K562 (cell line): ENCODE measurements at regions of chr6 and their contacts with region 1.

Region 1: DNA sequence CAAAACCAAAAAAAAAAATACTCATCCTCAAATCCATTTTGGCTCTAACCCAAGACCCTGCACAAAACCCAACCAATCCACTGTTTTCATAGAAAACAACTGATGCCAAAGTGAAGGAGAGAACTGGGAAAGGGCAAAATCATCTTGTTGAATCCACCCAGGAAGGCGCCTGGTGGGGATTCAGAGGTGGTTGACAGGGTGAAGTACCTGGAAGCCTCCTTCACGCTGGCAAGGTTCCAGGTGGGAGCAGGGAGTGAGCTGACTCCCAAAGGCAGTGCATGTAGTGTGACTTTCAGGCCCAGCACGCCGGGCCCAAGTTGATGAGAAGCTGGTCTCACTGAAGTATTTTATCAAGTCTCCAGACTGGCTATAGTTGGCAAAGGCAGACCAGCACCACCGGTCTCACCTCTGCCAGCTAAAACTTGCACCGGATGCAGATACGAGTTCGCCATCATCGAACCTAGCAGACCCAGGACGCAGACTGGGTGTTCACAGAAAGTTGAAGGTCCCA is 16.5 kb downstream of the PPP1R10 start:
- DNase-seq: peak in 2 of 4 experiments; percentile 29 to 30
- ATAC-seq: no peak
- H3K4me3 ChIP-seq: no peak overlapping the region
- H3K27ac ChIP-seq: no peak overlapping the region
- H3K4me1 ChIP-seq: peaks cover 4 to 11% of the 10 kb centered on the region in 2 experiments; a peak in 4 of 5 replicates
- H3K27me3 ChIP-seq: no peaks in the 10 kb centered on the region
- CTCF ChIP-seq: no peak
- EP300 ChIP-seq: no peak
- POLR2A ChIP-seq: peak; percentile 63
- RAD21 ChIP-seq: no peak

Region 2: DNA sequence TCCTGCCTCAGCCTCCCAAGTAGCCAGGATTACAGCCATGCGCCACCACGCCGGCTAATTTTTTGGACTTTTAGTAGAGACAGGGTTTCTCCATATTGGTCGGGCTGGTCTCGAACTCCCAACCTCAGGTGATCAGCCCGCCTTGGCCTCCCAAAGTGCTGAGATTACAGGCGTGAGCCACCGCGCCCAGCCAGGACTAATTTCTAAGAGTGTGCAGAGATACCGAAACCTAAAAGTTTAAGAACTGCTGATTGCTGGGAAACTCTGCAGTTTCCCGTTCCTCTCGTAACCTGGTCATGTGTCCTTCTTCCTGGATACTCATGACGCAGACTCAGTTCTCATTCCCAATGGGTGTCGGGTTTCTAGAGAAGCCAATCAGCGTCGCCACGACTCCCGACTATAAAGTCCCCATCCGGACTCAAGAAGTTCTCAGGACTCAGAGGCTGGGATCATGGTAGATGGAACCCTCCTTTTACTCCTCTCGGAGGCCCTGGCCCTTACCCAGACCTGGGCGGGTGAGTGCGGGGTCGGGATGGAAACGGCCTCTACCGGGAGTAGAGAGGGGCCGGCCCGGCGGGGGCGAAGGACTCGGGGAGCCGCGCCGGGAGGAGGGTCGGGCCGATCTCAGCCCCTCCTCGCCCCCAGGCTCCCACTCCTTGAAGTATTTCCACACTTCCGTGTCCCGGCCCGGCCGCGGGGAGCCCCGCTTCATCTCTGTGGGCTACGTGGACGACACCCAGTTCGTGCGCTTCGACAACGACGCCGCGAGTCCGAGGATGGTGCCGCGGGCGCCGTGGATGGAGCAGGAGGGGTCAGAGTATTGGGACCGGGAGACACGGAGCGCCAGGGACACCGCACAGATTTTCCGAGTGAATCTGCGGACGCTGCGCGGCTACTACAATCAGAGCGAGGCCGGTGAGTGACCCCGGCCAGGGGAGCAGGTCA is 111.2 kb before region 1 on chr6 and contains the start of gene HLA-E:
- CTCF ChIA-PET with region 1: interaction called, 17 read pairs
- POLR2A ChIA-PET with region 1: interaction called, 3 read pairs
- in situ Hi-C with region 1: loop called (anchors 5 kb)
- intact Hi-C with region 1: no loop called
- DNase-seq: peak; percentile 86 to 99 (median 91)
- ATAC-seq: peak; percentile 97
- H3K4me3 ChIP-seq: peak within 1 kb of the TSS; percentile 49
- H3K27ac ChIP-seq: peak within 1 kb of the TSS; percentile 51; the same call in 2 of the 3 replicates
- H3K4me1 ChIP-seq: peaks cover 7 to 24% of the 10 kb centered on the region in 2 experiments; a peak in 4 of 5 replicates
- H3K27me3 ChIP-seq: no peaks in the 10 kb centered on the region
- CTCF ChIP-seq: peak in 1 of 3 experiments; percentile 3; a peak in 1 of 6 replicates
- EP300 ChIP-seq: peak; percentile 4; the same call in 1 of the 2 replicates
- POLR2A ChIP-seq: peak; percentile 87
- RAD21 ChIP-seq: 0 out of 4 replicates have a peak, but pooled peaks of 1 of the 2 experiments have one; percentile 7
- polyA plus RNA-seq, gene HLA-E: 3.2 to 4.0 TPM

Region 3: DNA sequence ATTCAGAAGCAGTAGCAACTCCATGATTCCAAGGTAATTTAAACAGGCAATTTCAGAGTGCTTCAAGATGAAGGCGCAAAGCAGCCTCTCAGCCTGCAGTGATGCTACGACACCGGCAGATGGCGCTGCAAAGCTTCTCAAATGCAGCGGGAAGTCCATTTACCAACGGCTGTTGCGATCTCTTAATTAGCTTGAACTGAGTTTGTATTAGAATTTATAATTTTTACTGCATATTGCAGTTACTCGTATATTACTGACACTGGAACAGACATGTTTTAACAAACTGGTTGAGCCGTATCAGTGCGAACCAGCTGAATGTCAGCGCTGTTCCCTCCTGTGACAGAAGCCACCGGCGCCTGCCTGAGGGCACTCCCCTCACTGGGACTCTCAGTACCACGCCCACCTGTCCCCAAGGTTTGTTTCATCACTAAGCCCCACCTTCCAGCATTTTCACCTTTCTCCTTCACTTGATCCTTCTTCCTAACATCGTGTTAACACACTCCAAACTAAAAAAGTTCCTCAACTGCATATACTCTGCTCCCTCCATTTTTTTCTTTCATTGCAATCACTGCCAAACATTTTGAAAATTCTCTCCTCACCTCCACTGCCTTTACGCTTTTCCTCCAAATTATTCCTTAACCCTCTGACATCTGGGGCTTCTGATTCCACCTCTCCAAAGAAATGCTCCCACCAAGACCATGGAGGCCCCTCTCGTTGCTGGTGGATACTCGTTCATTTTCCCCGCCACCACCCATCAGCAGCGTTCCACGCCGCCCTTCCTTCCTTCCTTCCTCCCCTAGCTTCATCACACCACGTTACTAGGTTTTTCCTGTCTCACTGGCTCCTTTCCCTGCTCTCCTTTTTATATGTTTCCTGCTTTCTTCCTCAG is 58.7 kb before region 1 on chr6:
- CTCF ChIA-PET with region 1: interaction called, 6 read pairs
- POLR2A ChIA-PET with region 1: interaction called, 7 read pairs
- in situ Hi-C with region 1: no loop called
- intact Hi-C with region 1: loop called (anchors 1 kb)
- DNase-seq: peak; percentile 85 to 92 (median 90)
- ATAC-seq: peak; percentile 94
- H3K4me3 ChIP-seq: peak overlapping the region; percentile 32
- H3K27ac ChIP-seq: no peak overlapping the region
- H3K4me1 ChIP-seq: peaks cover 0 to 2% of the 10 kb centered on the region in 2 experiments; a peak in 2 of 5 replicates
- H3K27me3 ChIP-seq: no peaks in the 10 kb centered on the region
- CTCF ChIP-seq: peak; percentile 95 to 100 (median 98)
- EP300 ChIP-seq: no peak
- POLR2A ChIP-seq: peak; percentile 43
- RAD21 ChIP-seq: peak; percentile 87 to 91

Region 4: GRCh38 chr6:30571075-30571768 is 29.3 kb before region 1 on chr6 and contains the start of gene ABCF1:
- CTCF ChIA-PET with region 1: no interaction called
- POLR2A ChIA-PET with region 1: interaction called, 16 read pairs
- in situ Hi-C with region 1: no loop called
- intact Hi-C with region 1: no loop called
- DNase-seq: peak; percentile 99
- ATAC-seq: peak; percentile 95
- H3K4me3 ChIP-seq: peak within 1 kb of the TSS; percentile 67
- H3K27ac ChIP-seq: peak within 1 kb of the TSS; percentile 92
- H3K4me1 ChIP-seq: peaks cover 24 to 35% of the 10 kb centered on the region in 2 experiments; a peak in 4 of 5 replicates
- H3K27me3 ChIP-seq: no peaks in the 10 kb centered on the region
- CTCF ChIP-seq: 0 out of 6 replicates have a peak, but pooled peaks of 1 of the 3 experiments have one; percentile 13
- EP300 ChIP-seq: peak; percentile 41; the same call in 1 of the 2 replicates
- POLR2A ChIP-seq: peak; percentile 99
- RAD21 ChIP-seq: no peak
- polyA plus RNA-seq, gene ABCF1: 41.6 to 43.5 TPM

Region 5: DNA sequence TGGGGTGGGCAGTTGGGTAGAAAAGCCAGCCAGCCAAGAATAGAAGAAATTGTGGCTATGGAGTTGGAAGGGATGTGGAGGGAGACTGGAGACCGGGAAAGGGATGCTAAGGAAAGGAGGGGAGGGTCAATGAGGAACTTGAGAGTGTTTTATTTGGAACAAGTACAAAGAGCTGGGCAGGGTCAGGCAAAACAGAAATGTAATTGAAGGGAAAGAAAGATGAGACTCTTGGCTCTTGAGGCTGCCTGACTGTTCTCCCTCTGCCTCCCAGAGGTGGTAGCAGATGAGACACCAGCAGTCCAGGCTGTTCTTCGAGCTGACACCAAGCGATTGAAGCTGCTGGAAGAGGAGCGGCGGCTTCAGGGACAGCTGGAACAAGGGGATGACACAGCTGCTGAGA is 16.6 kb before region 1 on chr6:
- CTCF ChIA-PET with region 1: no interaction called
- POLR2A ChIA-PET with region 1: interaction called, 55 read pairs
- in situ Hi-C with region 1: no loop called
- intact Hi-C with region 1: no loop called
- DNase-seq: no peak
- ATAC-seq: no peak
- H3K4me3 ChIP-seq: no peak overlapping the region
- H3K27ac ChIP-seq: no peak overlapping the region
- H3K4me1 ChIP-seq: no peaks in the 10 kb centered on the region
- H3K27me3 ChIP-seq: no peaks in the 10 kb centered on the region
- CTCF ChIP-seq: no peak
- EP300 ChIP-seq: no peak
- POLR2A ChIP-seq: no peak
- RAD21 ChIP-seq: no peak

Region 6: GRCh38 chr6:30611150-30611855 is 10.8 kb after region 1 on chr6:
- CTCF ChIA-PET with region 1: interaction called, 3 read pairs
- POLR2A ChIA-PET with region 1: interaction called, 310 read pairs
- in situ Hi-C with region 1: no loop called
- intact Hi-C with region 1: no loop called
- DNase-seq: no peak
- ATAC-seq: no peak
- H3K4me3 ChIP-seq: no peak overlapping the region
- H3K27ac ChIP-seq: no peak overlapping the region
- H3K4me1 ChIP-seq: peaks cover 0 to 21% of the 10 kb centered on the region in 2 experiments; a peak in 3 of 5 replicates
- H3K27me3 ChIP-seq: no peaks in the 10 kb centered on the region
- CTCF ChIP-seq: no peak
- EP300 ChIP-seq: no peak
- POLR2A ChIP-seq: peak; percentile 55
- RAD21 ChIP-seq: no peak